ENCODE measurements at regions of chr19 and their contacts with region 1.

Region 1: GRCh38 chr19:35098413-35099049 is 17.1 kb upstream of the FXYD3 start:
- DNase-seq: no peak
- H3K4me3 ChIP-seq: no peak overlapping the region
- H3K27ac ChIP-seq: no peak overlapping the region
- H3K4me1 ChIP-seq: peaks cover 0 to 3% (median 1%) of the 10 kb centered on the region in 4 experiments; a peak in 3 of 7 replicates
- H3K27me3 ChIP-seq: no peaks in the 10 kb centered on the region
- CTCF ChIP-seq: no peak
- EP300 ChIP-seq: no peak
- POLR2A ChIP-seq: no peak
- RAD21 ChIP-seq: no peak

Region 2: GRCh38 chr19:35109395-35110112 is 11.0 kb after region 1 on chr19:
- CTCF ChIA-PET with region 1: interaction called, 18 read pairs
- POLR2A ChIA-PET with region 1: interaction called, 4 read pairs
- DNase-seq: no peak
- H3K4me3 ChIP-seq: no peak overlapping the region
- H3K27ac ChIP-seq: no peak overlapping the region
- H3K4me1 ChIP-seq: peaks cover 0 to 8% (median 2%) of the 10 kb centered on the region in 4 experiments; a peak in 3 of 7 replicates
- H3K27me3 ChIP-seq: no peaks in the 10 kb centered on the region; a peak in 1 of 7 replicates
- CTCF ChIP-seq: no peak
- EP300 ChIP-seq: no peak
- POLR2A ChIP-seq: no peak
- RAD21 ChIP-seq: no peak